B cell (primary cell): ENCODE measurements at regions of chrX and their contacts with region 1.

Region 1: DNA sequence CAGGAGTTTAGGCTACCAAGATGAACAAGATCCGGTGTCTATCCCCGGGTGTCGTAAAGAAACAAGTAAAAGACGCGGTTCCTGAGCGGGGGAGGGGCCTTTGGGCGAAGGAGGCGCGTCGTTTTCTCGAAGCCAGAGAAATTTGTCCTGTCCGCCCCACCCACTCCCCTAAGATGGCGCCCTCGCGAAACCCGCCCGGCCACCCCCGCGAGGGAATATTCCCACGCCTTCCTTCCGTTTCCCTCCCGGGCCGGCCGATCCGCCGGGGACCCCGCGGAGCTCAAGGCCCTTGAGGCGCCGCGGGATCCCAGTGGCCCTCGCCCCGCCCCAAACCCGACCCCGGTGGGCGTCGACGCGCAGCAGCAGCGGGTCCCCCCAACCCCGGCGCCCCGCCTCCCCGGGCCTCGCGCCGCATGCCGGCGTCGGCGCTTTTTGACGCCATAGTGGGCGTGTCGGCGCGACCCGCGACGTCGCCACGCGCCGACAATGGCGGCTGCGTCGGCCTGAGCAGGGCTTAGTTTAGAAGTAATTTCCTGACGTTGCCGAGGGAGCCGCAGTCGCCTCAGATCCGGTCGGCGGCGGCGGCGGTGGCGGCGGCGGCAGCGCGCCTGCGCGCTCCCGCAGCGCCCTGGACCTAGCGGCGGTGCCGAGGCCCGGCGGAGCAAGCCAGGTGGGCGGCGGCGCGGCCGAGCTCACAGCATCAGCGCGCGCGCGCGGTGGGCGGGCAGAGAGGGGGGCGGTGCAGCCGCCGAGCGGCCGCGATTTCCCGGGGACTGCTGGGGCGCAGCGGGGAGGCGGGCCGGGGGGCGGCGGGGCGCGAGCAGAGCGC is at the start of gene HTATSF1:
- DNase-seq: peak; percentile 92
- ATAC-seq: peak; percentile 77
- H3K4me3 ChIP-seq: peak within 1 kb of the TSS; percentile 62 to 83 (median 75)
- H3K4me3 Mint-ChIP-seq: peak within 1 kb of the TSS; percentile 93
- H3K27ac ChIP-seq: peak within 1 kb of the TSS; percentile 90 to 91
- H3K27ac Mint-ChIP-seq: peak within 1 kb of the TSS; percentile 99
- H3K4me1 ChIP-seq: peaks cover 6 to 7% of the 10 kb centered on the region in 2 donors
- H3K4me1 Mint-ChIP-seq: peaks cover 20% of the 10 kb centered on the region
- H3K27me3 ChIP-seq: no peaks in the 10 kb centered on the region
- H3K27me3 Mint-ChIP-seq: no peaks in the 10 kb centered on the region
- CTCF ChIP-seq: no peak
- total RNA-seq, gene HTATSF1: 17.9 and 18.7 TPM in 2 replicates

Region 2: DNA sequence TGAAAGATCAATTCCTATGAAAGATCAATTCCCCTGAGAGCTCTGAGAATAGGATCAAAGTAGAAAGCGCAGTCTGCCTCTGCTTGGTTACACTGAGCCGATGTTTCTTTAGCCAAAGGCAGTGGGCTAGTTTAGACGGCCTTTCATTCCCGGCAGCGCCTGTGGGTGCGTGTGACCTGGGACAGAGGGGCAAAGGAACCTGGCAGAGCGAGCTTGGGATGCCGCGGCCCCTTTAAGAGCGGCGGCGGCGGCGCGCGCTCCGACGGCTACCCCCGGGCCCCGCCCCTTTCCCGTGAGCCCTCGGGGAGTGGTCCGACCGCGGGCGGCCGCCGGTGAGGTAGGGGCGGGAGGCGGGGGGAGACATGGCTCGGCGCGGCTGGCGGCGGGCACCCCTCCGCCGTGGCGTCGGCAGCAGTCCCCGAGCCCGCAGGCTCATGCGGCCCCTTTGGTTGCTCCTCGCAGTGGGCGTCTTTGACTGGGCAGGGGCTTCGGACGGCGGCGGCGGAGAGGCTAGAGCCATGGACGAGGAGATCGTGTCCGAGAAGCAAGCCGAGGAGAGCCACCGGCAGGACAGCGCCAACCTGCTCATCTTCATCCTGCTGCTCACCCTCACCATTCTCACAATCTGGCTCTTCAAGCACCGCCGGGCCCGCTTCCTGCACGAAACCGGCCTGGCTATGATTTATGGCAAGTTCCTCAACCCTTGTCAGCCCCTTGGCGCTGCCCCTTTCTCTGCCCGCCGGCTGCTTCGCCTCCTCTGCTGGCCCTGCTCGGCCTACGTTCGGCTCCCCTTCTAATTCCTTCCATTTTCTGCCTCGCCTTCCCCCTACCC is 511.6 kb before region 1 on chrX and contains the start of gene SLC9A6:
- CTCF ChIA-PET with region 1: no interaction called
- POLR2A ChIA-PET with region 1: no interaction called
- intact Hi-C with region 1: loop called (anchors 1 kb)
- DNase-seq: peak; percentile 76
- ATAC-seq: peak; percentile 93
- H3K4me3 ChIP-seq: peak within 1 kb of the TSS; percentile 65 to 81 (median 77)
- H3K4me3 Mint-ChIP-seq: peak within 1 kb of the TSS; percentile 91
- H3K27ac ChIP-seq: peak within 1 kb of the TSS; percentile 62 to 77
- H3K27ac Mint-ChIP-seq: peak within 1 kb of the TSS; percentile 91
- H3K4me1 ChIP-seq: peaks cover 23 to 33% of the 10 kb centered on the region in 2 donors
- H3K4me1 Mint-ChIP-seq: peaks cover 43% of the 10 kb centered on the region
- H3K27me3 ChIP-seq: no peaks in the 10 kb centered on the region
- H3K27me3 Mint-ChIP-seq: no peaks in the 10 kb centered on the region
- CTCF ChIP-seq: no peak
- total RNA-seq, gene SLC9A6: 14.5 and 15.2 TPM in 2 replicates

Region 3: DNA sequence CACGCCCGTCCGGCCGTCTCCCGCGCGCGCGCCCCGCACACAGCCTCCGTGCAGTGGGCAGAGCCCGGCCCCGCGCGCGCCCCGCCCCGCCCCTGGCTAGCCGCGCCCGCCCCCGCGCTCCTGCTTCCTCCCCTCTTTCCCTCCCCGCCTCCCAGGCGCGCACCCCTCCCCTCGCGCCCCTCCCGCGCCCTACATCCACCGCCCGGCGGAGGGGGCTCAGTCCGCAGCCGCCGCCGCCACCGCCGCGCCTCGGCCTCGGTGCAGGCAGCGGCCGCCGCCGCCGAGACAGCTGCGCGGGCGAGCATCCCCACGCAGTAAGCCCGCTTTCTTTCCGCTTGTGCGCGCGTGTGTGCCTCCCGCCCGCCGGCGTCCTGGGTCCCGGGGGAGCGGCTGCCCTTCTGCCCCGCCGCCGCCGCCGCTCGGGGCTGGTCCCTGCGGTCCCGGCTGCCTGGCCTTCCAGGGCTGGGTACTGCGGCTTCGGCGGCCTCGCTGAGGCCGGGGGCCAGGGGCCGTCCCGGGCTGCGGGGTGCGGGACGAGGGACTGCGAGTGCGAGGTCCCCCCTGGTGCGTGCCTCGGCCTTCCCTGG is 349.6 kb before region 1 on chrX and contains the start of gene FHL1:
- CTCF ChIA-PET with region 1: no interaction called
- POLR2A ChIA-PET with region 1: no interaction called
- intact Hi-C with region 1: loop called (anchors 10 kb)
- DNase-seq: peak; percentile 52
- ATAC-seq: peak; percentile 83
- H3K4me3 ChIP-seq: peak within 1 kb of the TSS; percentile 16 to 66 (median 56)
- H3K4me3 Mint-ChIP-seq: peak within 1 kb of the TSS; percentile 85
- H3K27ac ChIP-seq: no peak within 1 kb of the TSS
- H3K27ac Mint-ChIP-seq: peak within 1 kb of the TSS; percentile 59
- H3K4me1 ChIP-seq: peaks cover 17 to 18% of the 10 kb centered on the region in 2 donors
- H3K4me1 Mint-ChIP-seq: peaks cover 26% of the 10 kb centered on the region
- H3K27me3 ChIP-seq: peaks cover 0 to 6% (median 0%) of the 10 kb centered on the region in 4 experiments
- H3K27me3 Mint-ChIP-seq: no peaks in the 10 kb centered on the region
- CTCF ChIP-seq: no peak
- total RNA-seq, gene FHL1: 5.6 and 8.0 TPM in 2 replicates

Region 4: DNA sequence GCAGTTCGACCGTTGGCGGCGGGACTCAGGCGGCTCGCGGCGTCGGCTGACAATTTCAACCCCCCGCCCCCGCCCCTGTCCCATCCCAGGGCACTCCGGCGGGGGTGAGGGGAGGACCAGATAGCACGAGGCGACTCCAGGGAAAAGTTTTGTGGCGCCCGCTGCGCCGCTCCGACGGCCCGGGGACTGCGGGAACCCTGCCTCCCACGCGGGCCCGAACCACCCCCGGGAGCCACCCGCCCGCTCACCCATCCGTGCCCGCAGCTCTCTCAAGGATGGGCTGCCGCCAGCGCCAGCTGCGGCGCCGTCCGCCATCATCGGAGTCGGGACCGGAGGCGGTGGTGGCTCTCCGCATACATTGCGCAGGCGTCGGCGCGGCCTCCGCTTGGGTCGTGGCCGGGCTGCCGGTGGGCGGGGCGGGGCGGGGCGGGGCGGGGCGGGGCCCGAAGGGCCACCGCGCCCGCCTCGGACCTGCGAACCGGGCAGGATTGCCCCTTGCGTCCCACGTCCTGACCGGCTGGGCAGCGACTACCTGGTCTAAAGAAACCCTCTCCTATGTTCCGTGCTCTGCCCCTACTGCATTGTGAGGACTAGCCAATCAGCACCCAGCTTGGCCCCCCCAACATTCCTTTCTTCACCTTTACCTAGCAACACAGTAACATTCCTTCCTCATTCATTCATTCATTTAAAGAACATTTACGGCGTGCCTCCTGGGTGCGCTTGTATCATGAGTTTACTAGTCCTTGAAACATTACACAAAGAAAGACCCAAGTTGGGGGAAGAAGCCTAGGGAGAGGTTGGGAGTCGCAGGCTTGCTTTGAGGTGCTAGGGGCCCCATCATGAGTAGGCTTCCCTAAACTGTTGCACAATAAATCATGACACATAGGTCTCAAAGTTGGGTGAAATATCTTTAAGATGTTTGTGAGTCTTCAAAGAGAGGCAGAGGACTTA is 245.7 kb before region 1 on chrX and contains the start of gene MAP7D3:
- CTCF ChIA-PET with region 1: no interaction called
- POLR2A ChIA-PET with region 1: no interaction called
- intact Hi-C with region 1: loop called (anchors 5 kb)
- DNase-seq: peak; percentile 81
- ATAC-seq: peak; percentile 90
- H3K4me3 ChIP-seq: peak within 1 kb of the TSS; percentile 38 to 75 (median 67)
- H3K4me3 Mint-ChIP-seq: peak within 1 kb of the TSS; percentile 88
- H3K27ac ChIP-seq: peak within 1 kb of the TSS; percentile 47 to 70
- H3K27ac Mint-ChIP-seq: peak within 1 kb of the TSS; percentile 89
- H3K4me1 ChIP-seq: peaks cover 5 to 11% of the 10 kb centered on the region in 2 donors
- H3K4me1 Mint-ChIP-seq: peaks cover 13% of the 10 kb centered on the region
- H3K27me3 ChIP-seq: no peaks in the 10 kb centered on the region
- H3K27me3 Mint-ChIP-seq: no peaks in the 10 kb centered on the region
- CTCF ChIP-seq: no peak
- total RNA-seq, gene MAP7D3: 11.5 and 13.0 TPM in 2 replicates

Region 5: GRCh38 chrX:136336623-136337022 is 160.4 kb before region 1 on chrX:
- CTCF ChIA-PET with region 1: no interaction called
- POLR2A ChIA-PET with region 1: no interaction called
- intact Hi-C with region 1: no loop called
- DNase-seq: no peak
- ATAC-seq: no peak
- H3K4me3 ChIP-seq: no peak overlapping the region
- H3K4me3 Mint-ChIP-seq: no peak overlapping the region
- H3K27ac ChIP-seq: no peak overlapping the region
- H3K27ac Mint-ChIP-seq: no peak overlapping the region
- H3K4me1 ChIP-seq: no peaks in the 10 kb centered on the region
- H3K4me1 Mint-ChIP-seq: no peaks in the 10 kb centered on the region
- H3K27me3 ChIP-seq: no peaks in the 10 kb centered on the region
- H3K27me3 Mint-ChIP-seq: no peaks in the 10 kb centered on the region
- CTCF ChIP-seq: no peak

Region 6: GRCh38 chrX:136909706-136910564 is 413.0 kb after region 1 on chrX:
- CTCF ChIA-PET with region 1: no interaction called
- POLR2A ChIA-PET with region 1: no interaction called
- intact Hi-C with region 1: loop called (anchors 1 kb)
- DNase-seq: peak; percentile 75
- ATAC-seq: peak; percentile 69
- H3K4me3 ChIP-seq: peak overlapping the region; percentile 71 to 84 (median 80)
- H3K4me3 Mint-ChIP-seq: peak overlapping the region; percentile 95
- H3K27ac ChIP-seq: peak overlapping the region; percentile 75 to 91
- H3K27ac Mint-ChIP-seq: peak overlapping the region; percentile 92
- H3K4me1 ChIP-seq: peaks cover 4 to 5% of the 10 kb centered on the region in 2 donors
- H3K4me1 Mint-ChIP-seq: peaks cover 7% of the 10 kb centered on the region
- H3K27me3 ChIP-seq: no peaks in the 10 kb centered on the region
- H3K27me3 Mint-ChIP-seq: no peaks in the 10 kb centered on the region
- CTCF ChIP-seq: no peak